ENCODE measurements at regions of chr1 and their contacts with region 1.

Region 1: GRCh38 chr1:81305997-81306452 is 494.7 kb upstream of the ADGRL2 start:
- DNase-seq: peak in 1 of 10 donors; percentile 3

Region 2: DNA sequence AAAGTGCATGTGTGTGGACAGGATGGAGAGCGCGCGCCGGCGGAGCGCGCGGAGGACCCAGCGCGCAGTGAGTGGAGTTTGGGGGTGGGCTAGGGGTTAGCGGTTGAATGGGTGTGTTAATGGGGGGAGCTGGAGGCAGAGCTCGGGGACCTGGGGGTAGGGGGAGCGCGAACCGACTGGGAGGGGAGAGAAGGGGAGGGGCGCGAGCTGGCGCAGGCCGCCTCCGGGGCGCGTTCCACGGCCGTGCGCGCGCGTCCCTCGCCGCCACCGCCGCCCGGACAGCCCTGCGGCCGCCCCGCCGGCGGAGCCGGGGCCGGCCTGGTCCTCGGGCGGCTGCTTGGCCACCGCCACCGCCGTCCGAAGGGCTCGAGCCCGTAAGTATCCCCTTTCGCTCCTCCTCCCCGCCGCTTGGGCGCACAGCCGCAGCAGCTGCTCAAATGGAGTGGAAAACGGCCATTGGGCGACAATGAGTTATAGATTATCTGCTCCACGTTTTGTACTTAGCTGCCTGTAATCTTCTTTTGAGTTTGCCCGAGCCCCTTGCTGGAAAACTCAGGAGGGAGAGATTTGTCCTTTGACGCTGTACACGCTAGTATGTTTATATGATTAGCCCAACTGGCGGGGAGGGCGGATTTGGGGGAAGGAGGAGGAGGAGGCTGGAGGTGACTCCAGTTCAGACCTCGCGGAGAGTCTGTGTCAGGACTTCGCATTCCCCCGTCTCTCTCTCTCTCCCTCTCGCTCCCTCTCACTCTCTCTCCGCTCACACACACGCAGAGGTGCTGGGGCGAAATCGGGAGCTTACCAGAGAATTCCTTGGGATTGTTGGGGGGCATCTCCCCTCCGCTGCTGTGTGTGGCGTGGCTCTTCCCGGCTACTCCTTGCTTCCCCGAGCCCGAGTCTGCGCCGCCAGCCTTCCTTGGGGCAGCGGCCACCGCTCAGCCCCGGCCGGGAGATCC is 494.9 kb after region 1 on chr1 and contains the start of gene ADGRL2:
- intact Hi-C with region 1: loop called (anchors 5 kb)
- DNase-seq: peak in 9 of 10 donors; percentile 22 to 92 (median 57)